ENCODE measurements at regions of chr20 and their contacts with region 1.

Region 1: GRCh38 chr20:36085686-36086267 is 68.8 kb upstream of the EPB41L1 start:
- DNase-seq: peak; percentile 84 to 98
- ATAC-seq: peak; percentile 90 to 93
- H3K4me3 ChIP-seq: peak overlapping the region; percentile 18; the same call in 1 of the 3 replicates
- H3K27ac ChIP-seq: peak overlapping the region; percentile 95
- H3K4me1 ChIP-seq: peaks cover 78% of the 10 kb centered on the region
- CTCF ChIP-seq: no peak
- EP300 ChIP-seq: peak in 1 of 2 experiments; percentile 50; a peak in 2 of 5 replicates
- POLR2A ChIP-seq: no peak
- RAD21 ChIP-seq: peak; percentile 23 to 24; a peak in 2 of 5 replicates

Region 2: DNA sequence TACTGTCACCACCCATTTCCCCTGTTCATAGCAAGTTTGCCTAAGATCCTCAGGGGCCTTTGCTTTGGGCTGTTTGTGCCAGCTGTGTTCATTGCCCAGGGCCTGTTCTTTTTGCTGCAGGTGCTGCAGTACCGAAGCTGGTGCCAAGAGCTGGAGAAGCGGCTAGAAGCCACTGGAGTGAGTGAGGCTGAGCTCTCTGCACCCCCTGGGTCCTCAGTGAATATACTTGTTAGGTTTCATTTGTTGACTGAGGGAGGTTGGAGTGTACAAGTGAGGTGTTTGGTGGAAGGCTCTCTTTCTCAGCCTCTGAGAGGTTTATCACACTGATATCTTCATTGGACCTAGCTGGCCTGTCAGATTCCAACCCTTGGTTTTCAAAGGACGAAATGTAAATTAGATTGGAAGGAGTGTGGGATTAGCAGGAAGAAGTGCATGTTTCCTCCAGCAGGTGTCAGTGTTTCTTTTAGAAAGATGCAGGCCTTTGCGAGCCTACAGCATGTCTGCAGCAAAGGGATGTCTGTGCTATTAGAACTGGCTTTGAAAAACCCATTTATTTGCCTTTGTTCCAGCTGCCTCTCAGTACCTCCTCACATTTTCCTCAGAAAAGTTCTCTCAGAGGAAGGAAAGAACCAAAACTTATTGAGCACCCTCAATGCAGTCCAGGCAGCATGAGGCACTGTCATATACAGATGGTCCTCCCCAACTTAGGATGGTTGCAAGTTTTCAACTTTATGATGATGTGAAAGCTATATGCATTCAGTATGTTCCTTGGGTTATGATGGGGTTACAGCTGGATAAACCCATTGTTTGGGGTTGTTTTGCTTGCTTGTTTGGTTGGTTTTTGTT is 622.1 kb before region 1 on chr20:
- CTCF ChIA-PET with region 1: no interaction called
- POLR2A ChIA-PET with region 1: no interaction called
- DNase-seq: peak; percentile 74
- ATAC-seq: peak; percentile 90 to 93
- H3K4me3 ChIP-seq: no peak overlapping the region
- H3K27ac ChIP-seq: 0 out of 6 replicates have a peak overlapping the region, but pooled peaks of 1 of the 2 experiments have one; percentile 6
- H3K4me1 ChIP-seq: peaks cover 21% of the 10 kb centered on the region
- CTCF ChIP-seq: peak; percentile 83
- EP300 ChIP-seq: no peak
- POLR2A ChIP-seq: no peak
- RAD21 ChIP-seq: peak; percentile 77 to 80

Region 3: DNA sequence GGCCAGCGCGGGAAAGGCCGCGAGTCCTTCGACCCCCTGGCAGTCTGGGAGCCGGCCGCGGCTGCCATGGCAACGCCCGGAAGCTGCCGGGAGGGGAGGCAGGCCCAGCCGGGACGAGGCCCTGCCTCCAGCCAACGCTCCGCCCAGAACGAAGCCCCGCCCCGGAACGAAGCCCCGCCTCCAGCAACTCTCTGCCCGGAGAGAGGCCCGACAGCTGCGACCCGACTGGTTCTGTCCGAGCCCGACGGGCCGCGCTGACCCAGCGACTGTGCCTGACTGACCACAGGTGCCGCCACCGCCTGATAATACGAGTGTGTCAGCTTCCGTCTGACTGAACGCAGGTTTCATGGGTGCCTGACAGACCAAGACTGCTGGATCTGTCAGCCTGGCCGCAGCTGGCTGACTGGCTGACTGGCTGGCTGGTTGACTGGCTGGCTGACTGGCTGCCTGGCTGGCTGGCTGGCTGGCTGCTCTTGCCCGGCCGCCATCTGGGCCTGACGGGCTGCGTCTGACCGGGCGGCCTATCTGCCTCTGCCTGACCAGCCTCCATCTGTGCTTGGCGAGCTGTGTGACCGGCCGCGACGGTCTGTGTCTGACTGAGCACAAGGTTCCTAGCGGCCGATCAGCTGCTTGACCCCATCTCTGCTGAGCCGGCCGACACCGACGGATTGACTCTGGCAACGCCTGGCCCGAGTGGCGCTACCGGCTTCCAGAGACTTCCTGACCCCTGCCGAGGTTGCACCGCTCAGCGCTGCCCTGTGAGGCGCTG is 20.9 kb before region 1 on chr20:
- CTCF ChIA-PET with region 1: interaction called, 6 read pairs
- POLR2A ChIA-PET with region 1: interaction called, 18 read pairs
- DNase-seq: peak; percentile 82 to 91
- ATAC-seq: peak; percentile 93 to 96
- H3K4me3 ChIP-seq: peak overlapping the region; percentile 69
- H3K27ac ChIP-seq: peak overlapping the region; percentile 88 to 93
- H3K4me1 ChIP-seq: peaks cover 33% of the 10 kb centered on the region
- CTCF ChIP-seq: no peak
- EP300 ChIP-seq: no peak
- POLR2A ChIP-seq: peak; percentile 86
- RAD21 ChIP-seq: no peak

Region 4: GRCh38 chr20:36336954-36337704 is 251.4 kb after region 1 on chr20:
- CTCF ChIA-PET with region 1: no interaction called
- POLR2A ChIA-PET with region 1: no interaction called
- DNase-seq: no peak
- ATAC-seq: peak in 1 of 2 experiments; percentile 20; a peak in 1 of 6 replicates
- H3K4me3 ChIP-seq: no peak overlapping the region
- H3K27ac ChIP-seq: no peak overlapping the region
- H3K4me1 ChIP-seq: no peaks in the 10 kb centered on the region
- CTCF ChIP-seq: no peak
- EP300 ChIP-seq: no peak
- POLR2A ChIP-seq: no peak
- RAD21 ChIP-seq: no peak